Activated CD4-positive, alpha-beta memory T cell treated with anti-CD3 and anti-CD28 coated beads, Interleukin-2, amount 10 ng/mL, durations not matched to agents 7 days and 5 days (primary cell): ENCODE measurements at regions of chr1 and their contacts with region 1.

Region 1: GRCh38 chr1:100452641-100453040 is 85.3 kb upstream of the GPR88 start:
- DNase-seq: no peak
- H3K4me3 Mint-ChIP-seq: no peak overlapping the region
- H3K27ac Mint-ChIP-seq: peak overlapping the region; percentile 85
- H3K4me1 Mint-ChIP-seq: peaks cover 86% of the 10 kb centered on the region
- H3K27me3 Mint-ChIP-seq: no peaks in the 10 kb centered on the region

Region 2: DNA sequence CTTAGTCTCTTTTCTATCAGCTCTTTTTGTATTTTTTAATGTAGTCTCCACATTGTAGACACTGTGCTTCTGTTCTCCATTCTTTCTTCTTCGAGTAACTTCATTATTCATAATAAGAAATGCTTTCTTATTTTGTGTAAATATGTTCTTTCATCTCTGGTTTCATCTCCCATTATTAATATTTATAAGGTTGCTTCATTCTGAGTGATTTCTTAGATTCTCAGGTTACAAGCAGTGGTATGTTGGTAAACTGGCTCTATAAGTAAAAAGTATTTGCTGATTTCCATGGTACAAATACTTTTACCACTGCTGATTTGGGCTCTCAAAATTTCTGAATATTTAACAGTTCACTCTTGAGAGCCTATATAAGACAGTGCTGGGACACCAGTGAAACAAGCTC is 19.1 kb before region 1 on chr1:
- CTCF ChIA-PET with region 1: interaction called, 5 read pairs
- POLR2A ChIA-PET with region 1: interaction called, 28 read pairs
- DNase-seq: no peak
- H3K4me3 Mint-ChIP-seq: no peak overlapping the region
- H3K27ac Mint-ChIP-seq: peak overlapping the region; percentile 4
- H3K4me1 Mint-ChIP-seq: peaks cover 70% of the 10 kb centered on the region
- H3K27me3 Mint-ChIP-seq: no peaks in the 10 kb centered on the region

Region 3: DNA sequence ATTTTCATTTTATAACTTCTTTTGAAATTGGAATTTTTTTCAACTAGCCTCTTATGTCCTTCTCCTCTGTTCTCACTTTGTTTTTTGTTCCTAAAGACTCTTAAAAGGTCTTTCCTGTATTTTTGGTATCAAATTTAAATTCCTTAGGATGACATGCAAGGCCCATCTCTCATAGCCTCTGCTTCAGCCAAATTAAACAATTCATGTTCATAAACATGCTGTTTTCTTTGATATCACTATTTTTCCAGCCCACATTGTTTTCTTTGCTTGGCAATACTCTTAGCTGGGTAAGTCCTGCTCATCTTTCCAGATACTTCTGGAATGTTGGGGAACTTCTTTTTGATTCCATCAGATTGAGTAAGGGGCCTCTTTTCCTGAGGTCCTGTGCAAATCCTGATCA is 29.5 kb after region 1 on chr1:
- CTCF ChIA-PET with region 1: no interaction called
- POLR2A ChIA-PET with region 1: no interaction called
- DNase-seq: no peak
- H3K4me3 Mint-ChIP-seq: no peak overlapping the region
- H3K27ac Mint-ChIP-seq: no peak overlapping the region
- H3K4me1 Mint-ChIP-seq: no peaks in the 10 kb centered on the region
- H3K27me3 Mint-ChIP-seq: no peaks in the 10 kb centered on the region